ENCODE measurements at regions of chr9 and their contacts with region 1.

Region 1: GRCh38 chr9:104895572-104895971 is 32.4 kb downstream of the ABCA1 start:
- DNase-seq: no peak
- ATAC-seq: no peak
- H3K4me3 ChIP-seq: no peak overlapping the region
- H3K4me3 Mint-ChIP-seq: no peak overlapping the region
- H3K27ac ChIP-seq: no peak overlapping the region
- H3K27ac Mint-ChIP-seq: no peak overlapping the region
- H3K4me1 ChIP-seq: no peaks in the 10 kb centered on the region
- H3K4me1 Mint-ChIP-seq: peaks cover 11 to 24% (median 13%) of the 10 kb centered on the region in 3 donors
- H3K27me3 ChIP-seq: no peaks in the 10 kb centered on the region
- H3K27me3 Mint-ChIP-seq: no peaks in the 10 kb centered on the region

Region 2: DNA sequence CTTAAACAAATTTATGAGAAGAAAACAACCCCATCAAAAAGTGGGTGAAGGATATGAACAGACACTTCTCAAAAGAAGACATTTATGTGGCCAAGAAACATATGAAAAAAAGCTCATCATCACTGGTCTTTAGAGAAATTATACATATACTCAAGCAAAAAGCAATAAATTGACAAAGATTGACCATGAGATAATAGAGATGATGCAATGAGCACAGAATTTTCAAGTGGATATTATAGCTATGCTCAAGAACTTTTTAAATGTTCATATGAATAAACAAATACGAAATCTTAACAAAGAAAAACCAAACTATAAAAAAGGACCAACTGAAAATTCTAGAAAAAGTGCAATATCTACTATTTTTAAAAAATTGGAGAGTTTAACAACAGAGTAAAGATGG is 186.8 kb before region 1 on chr9:
- CTCF ChIA-PET with region 1: no interaction called
- POLR2A ChIA-PET with region 1: interaction called, 3 to 14 read pairs
- DNase-seq: no peak
- ATAC-seq: no peak
- H3K4me3 ChIP-seq: no peak overlapping the region
- H3K4me3 Mint-ChIP-seq: no peak overlapping the region
- H3K27ac ChIP-seq: no peak overlapping the region
- H3K27ac Mint-ChIP-seq: no peak overlapping the region
- H3K4me1 ChIP-seq: no peaks in the 10 kb centered on the region
- H3K4me1 Mint-ChIP-seq: no peaks in the 10 kb centered on the region
- H3K27me3 ChIP-seq: no peaks in the 10 kb centered on the region
- H3K27me3 Mint-ChIP-seq: peaks cover 0 to 4% of the 10 kb centered on the region in 2 donors

Region 3: GRCh38 chr9:104850786-104851545 is 44.6 kb before region 1 on chr9:
- CTCF ChIA-PET with region 1: no interaction called
- POLR2A ChIA-PET with region 1: no interaction called
- DNase-seq: no peak
- ATAC-seq: no peak
- H3K4me3 ChIP-seq: no peak overlapping the region
- H3K4me3 Mint-ChIP-seq: no peak overlapping the region
- H3K27ac ChIP-seq: no peak overlapping the region
- H3K27ac Mint-ChIP-seq: no peak overlapping the region
- H3K4me1 ChIP-seq: no peaks in the 10 kb centered on the region
- H3K4me1 Mint-ChIP-seq: no peaks in the 10 kb centered on the region
- H3K27me3 ChIP-seq: no peaks in the 10 kb centered on the region
- H3K27me3 Mint-ChIP-seq: no peaks in the 10 kb centered on the region

Measured in T-cell (primary cell).